ENCODE measurements at regions of chr6 and their contacts with region 1.

Region 1: DNA sequence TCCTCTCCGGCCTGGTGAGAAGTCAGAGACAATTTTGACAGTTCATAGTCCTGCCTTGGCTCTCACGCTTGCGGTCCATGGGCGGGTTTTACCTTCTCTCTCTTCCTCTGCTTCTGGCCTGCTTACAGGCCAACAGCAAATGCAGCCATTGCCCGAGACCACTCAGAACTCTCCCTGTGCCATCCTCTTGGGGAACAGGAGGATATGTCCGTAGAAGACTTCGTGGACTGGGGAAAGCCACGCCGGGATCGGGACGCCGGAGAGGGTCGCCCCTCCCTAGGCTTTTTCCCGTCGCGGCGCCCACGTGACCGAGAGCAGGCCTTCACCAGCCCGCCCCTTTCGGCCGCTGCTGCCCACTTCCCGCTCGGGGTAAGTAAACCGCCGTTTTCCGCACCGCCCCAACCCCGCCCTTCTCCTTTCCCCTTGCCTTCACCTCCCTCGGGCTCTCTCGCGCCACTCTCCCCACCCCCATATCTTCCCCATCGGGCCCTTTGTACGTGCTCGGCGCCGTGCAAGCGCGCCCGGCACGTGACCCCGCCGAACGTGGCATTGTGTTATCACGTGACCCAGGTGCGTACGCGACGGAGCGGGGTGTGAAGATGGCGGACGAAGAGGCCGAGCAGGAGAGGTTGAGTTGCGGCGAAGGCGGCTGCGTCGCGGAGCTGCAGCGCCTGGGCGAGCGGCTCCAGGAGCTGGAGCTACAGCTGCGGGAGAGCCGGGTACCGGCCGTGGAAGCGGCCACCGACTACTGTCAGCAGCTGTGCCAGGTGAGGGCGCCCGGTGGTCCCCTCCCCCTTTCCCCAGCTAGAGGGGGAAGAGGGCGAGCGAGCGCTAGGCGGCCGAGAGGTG is at the start of gene ZNF292:
- DNase-seq: peak; percentile 98
- H3K4me3 ChIP-seq: peak within 1 kb of the TSS; percentile 82 to 98 (median 94)
- H3K27ac ChIP-seq: peak within 1 kb of the TSS; percentile 92 to 98 (median 94)
- H3K4me1 ChIP-seq: peaks cover 0 to 56% (median 49%) of the 10 kb centered on the region in 4 donors
- H3K27me3 ChIP-seq: no peaks in the 10 kb centered on the region
- CTCF ChIP-seq: no peak
- EP300 ChIP-seq: peak in 2 of 4 donors; percentile 37 to 46
- POLR2A ChIP-seq: peak; percentile 28 to 49
- total RNA-seq, gene ZNF292: 50.7 to 117 (median 54.7) TPM

Region 2: DNA sequence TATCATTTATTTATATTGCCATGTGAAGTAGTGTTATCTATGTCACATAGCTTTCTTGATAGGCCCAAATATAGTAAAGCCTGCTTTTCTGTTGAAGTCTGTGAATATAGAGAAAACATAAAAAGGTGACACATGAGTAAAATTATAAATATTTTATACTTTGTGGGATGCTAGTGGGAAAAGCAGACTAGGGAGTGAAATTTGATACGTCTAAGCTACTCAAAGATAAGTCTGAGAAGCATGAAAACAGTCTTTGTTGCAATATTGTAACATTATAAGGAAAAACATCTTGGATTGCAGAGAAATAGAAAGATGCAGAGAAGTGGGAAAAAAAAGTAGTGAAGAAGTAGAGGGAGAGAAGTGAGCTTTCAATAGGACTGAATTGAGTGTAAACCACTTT is 75.6 kb after region 1 on chr6:
- intact Hi-C with region 1: loop called (anchors 5 kb)
- DNase-seq: no peak
- H3K4me3 ChIP-seq: no peak overlapping the region
- H3K27ac ChIP-seq: no peak overlapping the region
- H3K4me1 ChIP-seq: no peaks in the 10 kb centered on the region
- H3K27me3 ChIP-seq: no peaks in the 10 kb centered on the region
- CTCF ChIP-seq: no peak
- EP300 ChIP-seq: no peak
- POLR2A ChIP-seq: no peak

Region 3: GRCh38 chr6:87322304-87323212 is 167.3 kb after region 1 on chr6 and contains the start of gene SMIM8:
- intact Hi-C with region 1: loop called (anchors 5 kb)
- DNase-seq: peak; percentile 88
- H3K4me3 ChIP-seq: peak within 1 kb of the TSS; percentile 51 to 92 (median 78)
- H3K27ac ChIP-seq: peak within 1 kb of the TSS; percentile 34 to 81 (median 78)
- H3K4me1 ChIP-seq: peaks cover 0 to 12% (median 7%) of the 10 kb centered on the region in 4 donors
- H3K27me3 ChIP-seq: no peaks in the 10 kb centered on the region
- CTCF ChIP-seq: peak; percentile 74 to 100 (median 86)
- EP300 ChIP-seq: no peak
- POLR2A ChIP-seq: peak in 1 of 2 donors; percentile 19
- total RNA-seq, gene SMIM8: 6.1 to 16.8 (median 12.0) TPM